PC-9 (cell line): ENCODE measurements at regions of chr2 and their contacts with region 1.

Region 1: DNA sequence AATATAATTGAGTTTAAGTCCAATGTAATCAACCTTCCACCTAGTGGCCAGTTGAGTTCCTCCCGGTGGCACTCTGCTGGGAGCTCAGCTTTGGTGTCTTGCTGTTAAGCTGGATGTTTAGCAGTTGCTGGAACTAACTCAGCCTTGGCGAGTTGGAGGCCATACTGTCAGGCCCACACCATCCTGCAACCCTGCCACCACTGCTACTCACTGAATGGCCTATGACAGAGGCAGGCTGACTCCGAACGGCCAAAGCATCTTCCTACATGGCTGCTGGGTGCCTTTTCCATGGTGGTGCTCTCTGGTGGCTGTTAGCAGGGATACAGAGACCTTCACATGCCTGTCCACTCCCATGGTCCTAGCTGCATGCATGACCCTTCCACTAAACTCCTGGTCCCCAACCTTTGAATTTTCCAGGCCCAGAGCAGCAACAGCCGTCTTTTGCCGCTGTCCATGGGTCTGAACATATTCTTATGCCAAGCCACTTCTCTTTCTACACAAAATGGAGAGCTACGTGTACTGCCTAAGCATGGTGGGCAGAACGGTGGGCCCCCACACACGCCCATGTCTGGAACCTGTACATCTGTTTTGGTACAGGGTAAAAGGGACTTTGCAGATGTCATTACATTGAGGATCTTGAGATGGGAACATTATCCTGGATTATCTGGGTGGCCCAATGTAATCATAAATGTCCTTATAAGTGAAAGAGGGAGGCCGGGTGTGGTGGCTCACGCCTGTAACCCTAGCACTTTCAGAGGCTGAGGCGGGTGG is 15.0 kb upstream of the TRAF3IP1 start:
- DNase-seq: no peak
- H3K4me3 ChIP-seq: no peak overlapping the region
- H3K27ac ChIP-seq: no peak overlapping the region
- H3K4me1 ChIP-seq: no peaks in the 10 kb centered on the region
- H3K27me3 ChIP-seq: no peaks in the 10 kb centered on the region
- CTCF ChIP-seq: peak; percentile 56; the same call in 1 of the 2 replicates

Region 2: DNA sequence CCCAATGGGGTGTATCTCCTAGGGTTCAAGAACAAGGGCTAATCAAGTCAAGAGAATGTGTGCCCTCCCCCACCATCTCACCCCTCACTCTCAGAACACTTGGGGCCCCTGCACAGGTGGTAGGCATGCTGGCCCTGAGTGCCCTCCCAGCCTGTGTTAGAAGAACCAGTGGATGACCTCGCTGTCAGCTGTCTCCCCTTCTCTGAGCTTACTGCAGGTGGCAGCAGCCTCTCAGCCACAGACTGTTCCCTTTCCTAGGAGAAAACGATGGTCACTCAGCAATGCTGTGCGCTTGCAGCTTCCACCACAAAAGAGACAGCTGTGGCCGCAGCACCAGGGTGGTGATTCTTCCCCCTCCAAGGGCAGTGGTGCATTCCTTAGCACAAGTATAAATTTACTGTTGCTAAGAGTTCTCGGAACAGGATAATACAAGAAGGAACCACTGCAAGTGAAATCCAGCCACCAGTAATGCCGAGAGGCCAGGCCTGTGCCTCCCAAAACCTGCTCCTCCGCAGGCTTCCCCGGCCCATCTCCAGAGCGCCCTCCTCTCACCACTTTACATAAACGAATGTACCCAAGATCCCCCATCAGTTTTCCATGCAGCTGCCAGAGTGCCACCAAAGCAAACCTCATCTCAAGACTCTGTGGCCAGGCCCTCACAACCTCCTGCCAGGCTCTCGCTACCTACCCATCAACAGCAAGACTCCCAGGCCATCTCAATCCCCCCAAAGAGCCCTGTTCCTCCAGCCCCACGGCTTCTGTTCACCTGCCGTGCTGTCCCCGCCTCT is 446.8 kb before region 1 on chr2:
- CTCF ChIA-PET with region 1: no interaction called
- POLR2A ChIA-PET with region 1: no interaction called
- intact Hi-C with region 1: no loop called
- DNase-seq: peak; percentile 78 to 88
- H3K4me3 ChIP-seq: peak overlapping the region; percentile 64
- H3K27ac ChIP-seq: no peak overlapping the region
- H3K4me1 ChIP-seq: peaks cover 42% of the 10 kb centered on the region
- H3K27me3 ChIP-seq: no peaks in the 10 kb centered on the region
- CTCF ChIP-seq: peak; percentile 93

Region 3: DNA sequence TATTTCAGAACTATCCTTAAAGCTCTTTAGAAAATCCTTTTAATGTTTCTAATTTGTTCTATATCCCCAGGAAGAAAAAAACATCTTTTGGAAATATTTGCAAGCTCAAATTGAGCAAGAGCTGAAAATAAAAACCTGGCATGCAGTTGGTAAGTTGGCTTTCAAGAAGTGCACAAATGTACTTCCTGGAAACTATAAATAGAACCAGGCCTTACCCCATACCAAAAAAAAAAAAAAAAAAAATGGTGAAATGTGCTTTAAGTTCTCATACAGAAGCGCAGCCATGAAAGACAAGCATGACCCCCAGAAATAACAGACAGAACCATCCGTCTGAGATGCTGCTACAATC is 917.0 kb after region 1 on chr2:
- CTCF ChIA-PET with region 1: interaction called, 12 read pairs
- POLR2A ChIA-PET with region 1: no interaction called
- intact Hi-C with region 1: no loop called
- DNase-seq: peak in 1 of 2 experiments; percentile 59
- H3K4me3 ChIP-seq: no peak overlapping the region
- H3K27ac ChIP-seq: no peak overlapping the region
- H3K4me1 ChIP-seq: peaks cover 16% of the 10 kb centered on the region
- H3K27me3 ChIP-seq: no peaks in the 10 kb centered on the region
- CTCF ChIP-seq: no peak